Prostate gland (tissue), 2 donors: ENCODE measurements at regions of chr16 and their contacts with region 1.

Region 1: GRCh38 chr16:89490387-89491237 is at the start of gene ANKRD11:
- DNase-seq: peak; percentile 99
- H3K4me3 ChIP-seq: peak within 1 kb of the TSS; percentile 93 to 94
- H3K27ac ChIP-seq: peak within 1 kb of the TSS; percentile 92 to 93
- H3K4me1 ChIP-seq: peaks cover 12% of the 10 kb centered on the region
- H3K27me3 ChIP-seq: no peaks in the 10 kb centered on the region
- CTCF ChIP-seq: peak in 2 of 4 experiments; percentile 24
- POLR2A ChIP-seq: peak; percentile 91
- total RNA-seq, gene ANKRD11: 66.2 to 143 TPM

Region 2: GRCh38 chr16:89343501-89344457 is 146.8 kb before region 1 on chr16:
- intact Hi-C with region 1: loop called (anchors 5 kb)
- DNase-seq: no peak
- H3K4me3 ChIP-seq: no peak overlapping the region
- H3K27ac ChIP-seq: peak overlapping the region; percentile 73
- H3K4me1 ChIP-seq: peaks cover 20% of the 10 kb centered on the region
- H3K27me3 ChIP-seq: no peaks in the 10 kb centered on the region
- CTCF ChIP-seq: no peak
- POLR2A ChIP-seq: peak; percentile 14

Region 3: GRCh38 chr16:89409161-89409711 is 81.4 kb before region 1 on chr16:
- intact Hi-C with region 1: loop called (anchors 10 kb)
- DNase-seq: no peak
- H3K4me3 ChIP-seq: no peak overlapping the region
- H3K27ac ChIP-seq: no peak overlapping the region
- H3K4me1 ChIP-seq: peaks cover 30% of the 10 kb centered on the region
- H3K27me3 ChIP-seq: no peaks in the 10 kb centered on the region
- CTCF ChIP-seq: no peak
- POLR2A ChIP-seq: no peak